AG04449 (cell line): ENCODE measurements at regions of chr4 and their contacts with region 1.

Region 1: GRCh38 chr4:80125252-80126177 is 52.5 kb upstream of the ANTXR2 start:
- DNase-seq: no peak
- H3K4me3 ChIP-seq: no peak overlapping the region
- CTCF ChIP-seq: peak; percentile 42

Region 2: DNA sequence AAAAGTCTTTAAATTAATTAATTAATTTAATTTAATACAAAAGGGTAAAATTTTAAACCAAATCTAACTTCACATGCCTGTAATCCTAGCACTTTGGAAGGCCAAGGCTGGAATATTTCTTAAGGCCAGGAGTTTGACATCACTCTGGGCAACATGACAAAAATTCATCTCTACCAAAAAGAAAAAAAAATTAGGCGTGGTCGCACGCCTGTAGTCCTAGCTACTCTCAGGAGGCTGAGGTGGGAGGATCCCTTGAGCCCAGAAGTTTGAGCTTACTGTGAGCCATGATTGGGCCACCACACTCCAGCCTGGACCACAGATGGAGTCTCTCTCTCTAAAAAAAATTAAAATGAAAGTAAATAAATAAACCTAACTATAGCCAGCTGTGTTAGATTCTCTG is 13.3 kb before region 1 on chr4:
- CTCF ChIA-PET with region 1: interaction called, 35 read pairs
- POLR2A ChIA-PET with region 1: no interaction called
- DNase-seq: no peak
- H3K4me3 ChIP-seq: no peak overlapping the region
- CTCF ChIP-seq: no peak

Region 3: DNA sequence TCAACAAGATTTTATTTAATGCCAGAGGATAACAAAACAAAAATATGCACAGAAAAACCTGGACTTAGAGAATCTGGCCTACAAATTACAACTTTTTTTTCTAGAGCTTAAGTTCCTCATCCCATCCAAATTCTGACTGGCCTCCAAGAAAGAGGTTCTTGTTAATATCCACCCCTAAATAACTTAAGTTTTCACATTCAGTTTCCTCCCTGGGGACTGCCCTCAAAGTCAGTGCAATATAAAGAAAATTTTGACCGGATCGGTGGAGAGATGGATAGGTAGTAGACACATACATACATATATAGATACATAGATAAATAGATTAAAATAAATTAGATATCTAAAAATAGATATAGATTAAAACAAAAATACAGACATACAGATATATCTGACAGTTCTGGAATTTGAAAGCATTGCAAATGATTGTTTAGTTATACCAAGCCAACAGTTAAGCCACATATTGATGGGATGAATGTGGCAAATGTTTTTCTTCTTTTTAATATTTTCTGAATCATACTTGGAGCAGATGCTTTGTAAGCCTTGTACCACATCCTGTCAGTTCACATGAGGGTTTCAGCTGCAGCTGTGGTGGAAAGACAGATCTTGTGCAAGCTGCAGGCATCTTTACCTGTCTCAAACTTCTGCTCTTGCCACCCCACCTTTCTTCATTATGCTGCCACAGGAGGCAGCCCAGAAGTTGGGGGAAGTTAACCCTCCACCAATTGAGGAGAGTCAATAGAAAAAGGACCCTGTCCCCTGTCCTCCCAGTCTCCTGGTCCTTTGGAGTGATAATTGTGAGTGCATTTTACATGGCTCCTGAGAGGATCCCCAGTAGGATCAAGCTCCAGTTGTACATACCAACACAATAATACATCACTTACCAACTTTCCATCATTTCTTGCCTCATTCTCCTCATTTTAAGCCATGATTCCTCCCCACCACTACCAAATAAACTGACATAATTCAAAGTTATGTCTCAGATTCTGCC is 13.3 kb after region 1 on chr4:
- CTCF ChIA-PET with region 1: interaction called, 35 read pairs
- POLR2A ChIA-PET with region 1: no interaction called
- DNase-seq: no peak
- H3K4me3 ChIP-seq: no peak overlapping the region
- CTCF ChIP-seq: no peak

Region 4: GRCh38 chr4:80153874-80154544 is 28.5 kb after region 1 on chr4:
- CTCF ChIA-PET with region 1: interaction called, 15 read pairs
- POLR2A ChIA-PET with region 1: no interaction called
- DNase-seq: no peak
- H3K4me3 ChIP-seq: no peak overlapping the region
- CTCF ChIP-seq: no peak

Region 5: DNA sequence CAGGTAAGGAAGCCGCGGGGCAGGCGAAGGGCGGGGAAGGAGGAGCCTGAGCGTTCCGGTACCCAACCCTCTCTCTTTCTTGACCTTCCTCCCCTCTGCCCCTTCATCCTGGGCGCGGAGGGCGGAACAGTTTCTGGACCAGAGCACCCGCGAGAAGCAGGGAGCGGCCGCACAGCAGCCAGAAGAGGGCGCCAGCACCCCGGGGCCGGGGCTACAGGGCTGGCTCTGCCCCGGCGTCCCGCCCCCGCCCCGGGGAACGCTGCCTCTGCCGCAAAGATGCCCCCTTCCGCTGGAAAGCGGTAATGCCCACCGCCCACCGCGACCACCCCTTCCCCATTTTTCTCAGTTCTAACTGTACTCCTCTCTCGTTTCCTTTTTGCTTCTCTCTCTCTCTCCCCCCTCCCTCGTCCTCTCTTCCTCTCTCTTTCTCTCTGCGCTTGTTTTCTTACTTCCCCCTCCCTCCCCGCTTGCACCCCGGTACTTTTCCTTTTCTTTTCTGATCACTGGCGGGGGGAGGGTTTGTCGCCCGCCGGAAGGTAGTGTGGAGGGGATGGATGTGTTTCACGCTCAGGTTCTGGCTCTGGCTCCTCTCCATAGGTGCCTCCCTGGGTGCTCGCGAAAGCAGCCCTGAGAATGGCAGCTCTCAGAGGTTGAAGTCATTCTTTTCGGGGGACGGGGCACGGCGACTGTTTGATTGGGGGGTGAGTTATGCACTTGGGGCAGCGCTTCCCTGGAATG is 58.7 kb after region 1 on chr4:
- CTCF ChIA-PET with region 1: interaction called, 23 read pairs
- POLR2A ChIA-PET with region 1: no interaction called
- DNase-seq: no peak
- H3K4me3 ChIP-seq: peak overlapping the region; percentile 90
- CTCF ChIP-seq: peak; percentile 97

Region 6: DNA sequence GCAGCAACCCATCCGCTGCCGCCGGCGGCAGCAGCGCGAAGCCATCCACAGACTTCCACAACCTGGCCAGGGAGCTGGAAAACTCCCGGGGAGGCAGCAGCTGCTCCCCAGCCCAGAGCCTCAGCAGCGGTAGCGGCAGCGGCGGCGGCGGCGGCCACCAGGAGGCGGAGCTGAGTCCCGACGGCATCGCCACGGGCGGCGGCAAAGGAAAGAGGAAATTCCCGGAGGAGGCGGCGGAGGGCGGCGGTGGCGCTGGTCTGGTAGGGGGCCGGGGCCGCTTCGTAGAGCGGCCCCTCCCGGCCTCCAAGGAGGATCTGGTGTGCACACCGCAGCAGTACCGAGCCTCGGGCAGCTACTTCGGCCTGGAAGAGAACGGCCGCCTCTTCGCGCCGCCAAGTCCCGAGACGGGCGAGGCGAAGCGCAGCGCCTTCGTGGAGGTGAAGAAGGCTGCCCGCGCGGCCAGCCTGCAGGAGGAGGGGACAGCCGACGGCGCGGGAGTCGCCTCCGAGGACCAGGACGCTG is 76.7 kb after region 1 on chr4:
- CTCF ChIA-PET with region 1: interaction called, 13 read pairs
- POLR2A ChIA-PET with region 1: no interaction called
- DNase-seq: no peak
- H3K4me3 ChIP-seq: peak overlapping the region; percentile 63
- CTCF ChIP-seq: peak; percentile 88

Region 7: GRCh38 chr4:80215449-80216052 is 90.0 kb after region 1 on chr4:
- CTCF ChIA-PET with region 1: interaction called, 18 read pairs
- POLR2A ChIA-PET with region 1: no interaction called
- DNase-seq: no peak
- H3K4me3 ChIP-seq: no peak overlapping the region
- CTCF ChIP-seq: peak; percentile 48